Common myeloid progenitor, CD34-positive (primary cell): ENCODE measurements at regions of chr9 and their contacts with region 1.

Region 1: GRCh38 chr9:127869310-127870152 is 7.9 kb downstream of the AK1 start:
- DNase-seq: peak; percentile 72 to 74 (median 73)
- H3K4me3 ChIP-seq: no peak overlapping the region
- H3K27ac ChIP-seq: no peak overlapping the region
- H3K4me1 ChIP-seq: peaks cover 0 to 26% (median 22%) of the 10 kb centered on the region in 4 experiments
- H3K27me3 ChIP-seq: no peaks in the 10 kb centered on the region

Region 2: GRCh38 chr9:127049044-127049443 is 820.5 kb before region 1 on chr9:
- CTCF ChIA-PET with region 1: no interaction called
- POLR2A ChIA-PET with region 1: no interaction called
- DNase-seq: peak; percentile 60 to 82 (median 74)
- H3K4me3 ChIP-seq: peak overlapping the region in 3 of 7 experiments; percentile 13 to 52 (median 20)
- H3K27ac ChIP-seq: peak overlapping the region in 1 of 2 experiments; percentile 5
- H3K4me1 ChIP-seq: peaks cover 0 to 24% (median 14%) of the 10 kb centered on the region in 4 experiments
- H3K27me3 ChIP-seq: no peaks in the 10 kb centered on the region

Region 3: GRCh38 chr9:127525401-127526187 is 343.9 kb before region 1 on chr9:
- CTCF ChIA-PET with region 1: no interaction called
- POLR2A ChIA-PET with region 1: no interaction called
- DNase-seq: peak; percentile 14 to 51 (median 45)
- H3K4me3 ChIP-seq: no peak overlapping the region
- H3K27ac ChIP-seq: no peak overlapping the region
- H3K4me1 ChIP-seq: peaks cover 0 to 7% (median 3%) of the 10 kb centered on the region in 4 experiments
- H3K27me3 ChIP-seq: no peaks in the 10 kb centered on the region

Region 4: DNA sequence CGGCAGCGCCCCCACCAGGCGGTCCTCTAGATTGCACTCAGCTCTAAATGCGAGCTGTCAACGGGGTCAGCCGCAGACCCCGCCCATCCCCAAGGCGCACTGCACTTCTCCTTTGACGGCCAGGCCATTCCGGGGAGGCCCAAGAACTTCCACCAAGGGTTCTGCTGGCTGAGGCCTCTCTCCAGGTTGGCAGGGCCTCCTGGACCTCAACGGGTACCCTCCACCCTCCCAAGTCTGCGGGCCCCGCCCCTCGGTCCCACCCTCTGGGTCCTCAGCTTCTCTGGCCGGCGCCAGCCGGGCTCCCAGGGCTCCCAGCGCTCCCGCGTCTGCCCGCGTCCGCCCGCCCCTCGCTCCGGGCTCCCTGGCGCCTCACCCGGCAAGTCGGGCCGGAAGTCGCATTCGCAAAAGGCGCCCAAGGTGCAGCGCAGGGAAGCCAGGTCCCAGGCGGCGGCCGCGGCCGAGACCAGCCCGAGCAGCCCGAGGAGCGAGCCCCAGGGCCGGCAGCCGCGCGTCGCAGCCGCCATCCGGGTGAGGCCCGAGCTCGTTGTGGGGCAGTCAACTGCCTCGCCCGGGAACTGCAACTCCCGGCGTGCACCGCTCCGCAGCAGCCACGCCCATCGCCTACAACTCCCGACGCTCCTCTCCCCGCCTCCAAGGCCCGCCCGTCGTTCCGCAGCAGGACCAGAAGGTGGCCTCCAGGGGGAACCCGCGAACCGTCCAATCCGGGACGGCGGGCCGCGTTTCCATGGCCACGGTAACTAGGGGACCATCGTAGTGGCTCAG is 134.6 kb before region 1 on chr9 and contains the start of gene TOR2A:
- CTCF ChIA-PET with region 1: interaction called, 14 read pairs
- POLR2A ChIA-PET with region 1: no interaction called
- DNase-seq: peak; percentile 98 to 99 (median 99)
- H3K4me3 ChIP-seq: peak within 1 kb of the TSS; percentile 53 to 87 (median 71)
- H3K27ac ChIP-seq: peak within 1 kb of the TSS; percentile 87 to 88
- H3K4me1 ChIP-seq: peaks cover 0 to 22% (median 15%) of the 10 kb centered on the region in 4 experiments
- H3K27me3 ChIP-seq: no peaks in the 10 kb centered on the region

Region 5: DNA sequence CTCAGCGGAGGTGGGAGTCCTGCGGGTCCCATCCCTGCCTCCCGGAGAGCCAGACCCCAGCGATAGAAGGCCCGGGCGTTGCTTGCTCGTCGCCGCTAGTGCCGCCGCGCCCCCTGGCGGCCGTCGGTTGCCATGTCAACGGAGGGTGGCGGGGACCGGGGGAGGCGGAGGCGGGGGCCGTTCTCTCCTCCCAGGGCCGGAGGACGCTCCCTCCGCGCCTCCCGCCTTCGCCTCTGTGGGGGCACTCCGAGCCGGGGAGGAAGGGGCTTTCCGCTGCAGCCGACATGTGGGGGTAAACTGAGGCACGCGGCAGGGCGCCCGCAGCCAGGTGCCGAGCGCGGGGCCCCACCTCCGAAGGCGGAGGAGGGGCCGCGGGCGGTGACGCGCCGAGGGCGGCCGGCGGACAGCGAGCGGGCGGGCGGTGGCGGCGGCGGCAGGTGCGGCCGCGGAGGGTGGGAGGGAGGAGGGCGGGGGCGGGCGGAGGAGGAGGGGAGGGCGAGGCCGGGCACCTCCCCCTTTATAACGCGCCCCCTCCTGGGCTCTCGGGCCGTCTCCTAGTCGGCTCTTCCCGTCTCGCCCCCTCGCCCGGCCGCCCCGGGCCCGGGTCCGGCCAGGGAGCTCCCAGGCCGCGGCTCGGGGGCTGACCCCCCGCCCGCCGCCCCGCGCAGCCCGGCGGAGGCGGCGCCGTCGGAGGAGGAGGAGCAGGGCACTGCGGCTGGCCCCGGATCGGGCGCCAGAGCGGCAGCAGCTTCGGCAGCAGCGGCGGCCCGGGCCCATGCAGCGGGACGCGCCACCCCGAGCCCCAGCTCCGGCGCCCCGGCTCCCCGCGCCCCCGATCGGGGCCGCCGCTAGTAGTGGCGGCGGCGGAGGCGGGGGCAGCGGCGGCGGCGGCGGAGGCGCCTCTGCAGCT is 84.3 kb before region 1 on chr9:
- CTCF ChIA-PET with region 1: interaction called, 50 read pairs
- POLR2A ChIA-PET with region 1: interaction called, 4 read pairs
- DNase-seq: peak; percentile 89 to 94 (median 92)
- H3K4me3 ChIP-seq: peak overlapping the region; percentile 59 to 94 (median 85)
- H3K27ac ChIP-seq: peak overlapping the region in 1 of 2 experiments; percentile 89
- H3K4me1 ChIP-seq: peaks cover 23 to 69% (median 62%) of the 10 kb centered on the region in 4 experiments
- H3K27me3 ChIP-seq: no peaks in the 10 kb centered on the region

Region 6: GRCh38 chr9:127817881-127818434 is 51.6 kb before region 1 on chr9:
- CTCF ChIA-PET with region 1: interaction called, 10 read pairs
- POLR2A ChIA-PET with region 1: no interaction called
- DNase-seq: no peak
- H3K4me3 ChIP-seq: no peak overlapping the region
- H3K27ac ChIP-seq: peak overlapping the region in 1 of 2 experiments; percentile 11
- H3K4me1 ChIP-seq: no peaks in the 10 kb centered on the region
- H3K27me3 ChIP-seq: no peaks in the 10 kb centered on the region

Region 7: GRCh38 chr9:127854184-127854806 is 15.2 kb before region 1 on chr9 and contains the start of gene ENG:
- CTCF ChIA-PET with region 1: interaction called, 33 read pairs
- POLR2A ChIA-PET with region 1: interaction called, 3 read pairs
- DNase-seq: peak in 1 of 3 donors; percentile 43
- H3K4me3 ChIP-seq: peak within 1 kb of the TSS; percentile 15 to 84 (median 78)
- H3K27ac ChIP-seq: peak within 1 kb of the TSS; percentile 46 to 67
- H3K4me1 ChIP-seq: peaks cover 11 to 76% (median 73%) of the 10 kb centered on the region in 4 experiments
- H3K27me3 ChIP-seq: no peaks in the 10 kb centered on the region

Region 8: DNA sequence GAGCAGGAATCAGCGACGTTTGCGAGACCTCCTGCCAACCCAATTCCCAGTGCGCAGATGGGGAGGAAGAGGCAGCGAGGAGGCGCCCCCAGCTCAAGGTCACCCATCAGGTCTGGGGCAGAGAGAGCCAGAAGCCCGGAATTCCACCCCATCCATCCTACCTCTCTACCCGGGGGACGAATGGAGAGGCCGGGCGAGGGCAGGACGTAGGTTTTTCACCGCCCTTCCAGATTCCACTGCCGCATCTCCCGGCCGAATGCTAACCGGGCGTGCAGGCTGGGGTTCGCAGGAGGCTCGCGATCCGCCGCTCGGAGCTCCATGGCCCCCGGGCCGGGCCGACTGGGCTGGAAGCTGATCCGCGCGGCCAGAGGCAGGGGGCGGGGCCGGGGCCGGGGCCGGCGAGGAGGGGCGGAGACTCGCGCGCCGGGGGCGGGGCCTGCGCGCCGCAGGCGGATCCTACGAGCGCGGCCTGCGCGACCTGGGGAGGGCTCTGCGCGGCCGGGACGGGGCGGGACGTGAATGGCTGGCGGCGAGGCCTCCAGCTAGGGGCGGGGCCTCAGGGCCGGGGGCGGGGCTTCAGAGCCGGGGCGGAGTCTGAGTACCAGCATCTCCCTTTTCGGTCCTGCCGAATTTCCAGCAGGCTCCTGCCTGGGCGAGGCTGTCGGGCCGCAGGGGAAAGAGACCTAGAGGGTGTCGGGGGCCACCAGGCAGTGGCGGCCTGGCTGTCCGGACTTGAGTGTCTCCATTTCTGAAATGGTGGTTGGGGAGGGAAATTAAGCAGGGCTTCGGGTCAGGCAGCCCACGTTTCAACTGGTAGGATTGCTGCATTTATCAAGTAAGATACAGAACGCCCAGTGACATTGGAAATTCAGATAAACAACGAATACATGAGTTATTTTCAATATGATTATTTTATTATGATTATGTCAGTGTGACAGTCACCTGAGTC is 47.4 kb after region 1 on chr9 and contains the start of gene ST6GALNAC4:
- CTCF ChIA-PET with region 1: interaction called, 41 read pairs
- POLR2A ChIA-PET with region 1: interaction called, 4 read pairs
- DNase-seq: peak; percentile 85 to 91 (median 91)
- H3K4me3 ChIP-seq: peak within 1 kb of the TSS; percentile 41 to 94 (median 77)
- H3K27ac ChIP-seq: peak within 1 kb of the TSS in 1 of 2 experiments; percentile 66
- H3K4me1 ChIP-seq: peaks cover 2 to 62% (median 48%) of the 10 kb centered on the region in 4 experiments
- H3K27me3 ChIP-seq: peaks cover 0 to 2% (median 0%) of the 10 kb centered on the region in 5 experiments